ENCODE measurements at regions of chr2 and their contacts with region 1.

Region 1: DNA sequence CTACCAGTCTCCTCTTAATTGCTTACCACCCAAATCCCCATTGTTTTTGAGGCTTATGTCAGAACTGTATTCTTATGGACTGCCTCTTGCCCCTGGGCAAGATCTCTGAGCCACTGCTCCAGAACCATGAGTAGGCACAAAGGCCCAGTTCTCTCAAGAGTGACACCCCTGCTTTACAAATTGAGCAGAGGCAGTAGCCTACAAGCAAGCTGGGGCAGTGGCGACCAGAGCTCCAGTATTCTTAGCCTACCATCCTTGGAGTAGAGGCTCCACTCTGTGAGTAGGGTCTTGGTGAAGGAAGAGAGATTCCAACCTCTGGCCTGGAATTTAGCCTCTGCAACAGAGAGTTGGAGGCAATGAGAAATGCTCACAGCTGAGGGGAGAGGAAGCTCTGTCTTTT is 36.5 kb downstream of the WDR75 start:
- DNase-seq: no peak
- ATAC-seq: no peak
- H3K4me3 Mint-ChIP-seq: no peak overlapping the region
- H3K27ac Mint-ChIP-seq: no peak overlapping the region
- H3K4me1 Mint-ChIP-seq: no peaks in the 10 kb centered on the region
- H3K27me3 Mint-ChIP-seq: no peaks in the 10 kb centered on the region

Region 2: GRCh38 chr2:189454009-189454408 is 23.7 kb before region 1 on chr2:
- CTCF ChIA-PET with region 1: no interaction called
- POLR2A ChIA-PET with region 1: interaction called, 8 read pairs
- intact Hi-C with region 1: loop called in 1 of 2 experiments (anchors 2 kb)
- DNase-seq: no peak
- ATAC-seq: no peak
- H3K4me3 Mint-ChIP-seq: no peak overlapping the region
- H3K27ac Mint-ChIP-seq: peak overlapping the region; percentile 16
- H3K4me1 Mint-ChIP-seq: peaks cover 3% of the 10 kb centered on the region
- H3K27me3 Mint-ChIP-seq: no peaks in the 10 kb centered on the region